Psoas muscle (tissue), 8 donors: ENCODE measurements at regions of chr14 and their contacts with region 1.

Region 1: GRCh38 chr14:85958069-85958468 is 428.1 kb downstream of the FLRT2 start:
- DNase-seq: no peak
- ATAC-seq: no peak
- H3K4me3 ChIP-seq: no peak overlapping the region
- H3K27ac ChIP-seq: no peak overlapping the region
- H3K4me1 ChIP-seq: no peaks in the 10 kb centered on the region
- H3K27me3 ChIP-seq: no peaks in the 10 kb centered on the region
- CTCF ChIP-seq: no peak

Region 2: GRCh38 chr14:85921241-85921640 is 36.8 kb before region 1 on chr14:
- intact Hi-C with region 1: no loop called
- DNase-seq: no peak
- ATAC-seq: no peak
- H3K4me3 ChIP-seq: no peak overlapping the region
- H3K27ac ChIP-seq: no peak overlapping the region
- H3K4me1 ChIP-seq: no peaks in the 10 kb centered on the region
- H3K27me3 ChIP-seq: no peaks in the 10 kb centered on the region
- CTCF ChIP-seq: no peak

Region 3: GRCh38 chr14:86815341-86815740 is 857.3 kb after region 1 on chr14:
- intact Hi-C with region 1: loop called in 1 of 2 experiments (anchors 10 kb)
- DNase-seq: no peak
- ATAC-seq: no peak
- H3K4me3 ChIP-seq: no peak overlapping the region
- H3K27ac ChIP-seq: no peak overlapping the region
- H3K4me1 ChIP-seq: no peaks in the 10 kb centered on the region
- H3K27me3 ChIP-seq: no peaks in the 10 kb centered on the region
- CTCF ChIP-seq: no peak